Activated CD4-positive, alpha-beta T cell treated with anti-CD3 and anti-CD28 coated beads for 36 hours (primary cell): ENCODE measurements at regions of chr3 and their contacts with region 1.

Region 1: DNA sequence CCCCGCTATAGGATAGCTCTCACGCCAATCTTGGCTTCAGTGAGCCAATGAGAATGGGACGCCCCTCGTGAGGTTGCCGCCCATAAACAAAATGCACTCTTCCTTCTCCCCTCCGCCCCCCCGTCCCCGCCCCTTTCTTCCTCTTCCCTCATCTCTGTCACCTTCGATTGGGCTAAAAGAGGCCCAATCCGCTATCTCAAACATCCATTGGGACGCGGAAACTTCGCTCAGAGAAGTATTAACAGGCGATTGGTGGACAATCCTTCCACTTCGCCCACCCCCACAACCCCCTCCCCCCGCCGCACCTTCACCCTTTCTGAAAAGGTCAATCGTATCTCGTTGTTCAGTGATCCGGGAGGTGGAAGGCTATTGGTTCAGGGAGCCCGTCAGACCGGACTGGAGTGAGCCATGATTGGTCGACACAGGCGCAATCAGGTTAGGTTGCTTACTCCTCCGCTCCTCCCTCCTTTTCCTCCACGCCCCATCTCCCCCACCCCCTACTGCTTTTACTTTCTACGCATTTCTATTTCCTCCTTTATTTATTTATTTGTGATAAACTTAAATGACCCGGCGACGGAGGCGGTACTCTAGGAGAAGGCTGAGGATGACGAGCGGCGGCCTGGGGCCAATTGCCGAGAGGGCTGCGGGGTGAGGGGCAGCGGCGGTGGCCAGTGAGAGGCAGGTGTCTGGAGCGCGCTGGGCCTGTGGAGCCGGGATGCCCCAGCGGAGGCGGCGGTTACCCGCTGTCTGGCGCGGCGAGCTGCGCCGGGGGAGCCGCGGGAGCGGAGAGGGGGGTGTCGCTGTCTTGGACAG is 447 bp upstream of the ZBTB20 start:
- DNase-seq: peak; percentile 97
- ATAC-seq: peak; percentile 85
- H3K4me3 Mint-ChIP-seq: peak overlapping the region; percentile 97
- H3K27ac Mint-ChIP-seq: peak overlapping the region; percentile 98
- H3K4me1 Mint-ChIP-seq: peaks cover 21% of the 10 kb centered on the region
- H3K27me3 Mint-ChIP-seq: no peaks in the 10 kb centered on the region

Region 2: DNA sequence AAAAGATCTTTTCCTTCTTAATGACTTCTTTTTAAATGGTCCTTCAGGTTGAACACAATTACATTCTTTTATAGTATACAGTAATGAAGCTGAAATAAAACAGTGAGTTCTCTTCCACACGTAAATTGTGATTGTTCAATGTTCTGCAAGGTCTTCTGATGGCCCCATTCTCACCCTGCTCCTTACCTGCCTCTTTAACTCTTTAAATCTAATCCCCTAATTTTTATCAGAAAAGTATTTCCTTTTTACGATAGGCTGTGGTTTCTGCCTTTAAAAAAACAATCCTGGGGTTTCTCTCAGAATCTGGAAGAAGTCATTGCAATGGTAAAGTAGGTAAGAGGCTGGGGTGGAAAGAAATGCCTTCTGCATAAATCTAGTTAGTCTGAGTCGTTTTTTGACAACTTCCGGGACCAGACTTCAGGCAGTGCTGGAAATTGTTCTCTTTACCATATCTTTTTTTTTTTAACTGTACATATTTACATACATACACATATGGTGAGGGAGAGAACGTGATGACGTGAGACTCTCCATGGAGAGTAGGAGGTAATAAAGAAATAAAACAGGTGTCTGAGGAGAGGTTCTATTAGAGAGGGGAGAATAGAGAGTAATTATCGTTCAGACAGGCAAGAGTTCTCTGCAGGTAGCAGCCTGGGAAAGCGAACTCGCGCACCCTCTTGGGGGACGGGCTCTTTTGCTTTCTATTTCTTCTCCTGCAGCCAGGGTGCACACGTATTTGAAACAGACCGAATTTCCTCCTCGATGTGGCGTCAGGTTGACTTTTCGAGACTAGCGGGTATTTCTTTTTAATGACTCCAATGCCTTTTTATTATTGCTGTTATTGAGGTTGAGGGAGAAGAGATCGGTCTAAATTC is 1615.5 kb before region 1 on chr3 and contains the start of gene SIDT1:
- CTCF ChIA-PET with region 1: no interaction called
- POLR2A ChIA-PET with region 1: no interaction called
- intact Hi-C with region 1: loop called in 1 of 2 experiments (anchors 5 kb)
- DNase-seq: peak; percentile 85
- ATAC-seq: peak; percentile 78
- H3K4me3 Mint-ChIP-seq: peak within 1 kb of the TSS; percentile 89
- H3K27ac Mint-ChIP-seq: peak within 1 kb of the TSS; percentile 96
- H3K4me1 Mint-ChIP-seq: peaks cover 49% of the 10 kb centered on the region
- H3K27me3 Mint-ChIP-seq: no peaks in the 10 kb centered on the region
- total RNA-seq, gene SIDT1: 19.0 to 19.7 TPM

Region 3: GRCh38 chr3:113696658-113697499 is 1450.7 kb before region 1 on chr3:
- CTCF ChIA-PET with region 1: no interaction called
- POLR2A ChIA-PET with region 1: no interaction called
- intact Hi-C with region 1: loop called in 1 of 2 experiments (anchors 2 kb)
- DNase-seq: peak; percentile 99
- ATAC-seq: peak; percentile 92
- H3K4me3 Mint-ChIP-seq: no peak overlapping the region
- H3K27ac Mint-ChIP-seq: no peak overlapping the region
- H3K4me1 Mint-ChIP-seq: peaks cover 27% of the 10 kb centered on the region
- H3K27me3 Mint-ChIP-seq: no peaks in the 10 kb centered on the region

Region 4: DNA sequence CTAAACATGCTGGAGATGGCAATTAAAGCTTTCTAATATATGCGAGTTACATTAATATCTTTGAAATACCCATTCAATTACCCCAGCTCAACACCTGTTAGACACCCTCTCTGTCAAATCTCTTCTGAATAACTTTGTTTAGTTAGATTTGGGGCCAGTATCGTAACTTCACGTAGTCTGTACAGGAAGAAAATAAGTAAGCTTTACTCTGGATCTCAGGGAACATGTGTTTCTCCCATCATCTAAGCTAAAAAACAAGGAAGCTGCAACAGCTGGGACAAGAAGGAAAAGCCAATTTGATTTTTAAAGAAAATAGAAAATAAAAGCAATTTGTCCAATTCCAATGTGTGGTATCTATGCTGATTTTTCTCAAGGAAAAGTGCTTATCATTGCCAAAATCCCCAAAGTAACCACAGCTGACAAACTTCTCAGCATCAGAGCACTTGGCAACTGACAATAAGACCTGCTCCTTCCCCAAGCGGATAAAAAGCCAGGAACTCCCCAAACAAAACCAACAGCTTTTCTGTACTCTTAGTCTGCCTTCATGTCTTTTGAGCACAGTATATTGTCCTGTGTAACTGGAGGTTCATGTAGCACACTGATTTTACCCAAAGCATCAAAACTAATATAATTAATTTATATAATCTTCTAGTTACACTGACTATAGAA is 279.6 kb before region 1 on chr3:
- CTCF ChIA-PET with region 1: no interaction called
- POLR2A ChIA-PET with region 1: interaction called, 11 read pairs
- intact Hi-C with region 1: no loop called
- DNase-seq: no peak
- ATAC-seq: no peak
- H3K4me3 Mint-ChIP-seq: no peak overlapping the region
- H3K27ac Mint-ChIP-seq: no peak overlapping the region
- H3K4me1 Mint-ChIP-seq: peaks cover 27% of the 10 kb centered on the region
- H3K27me3 Mint-ChIP-seq: no peaks in the 10 kb centered on the region

Region 5: DNA sequence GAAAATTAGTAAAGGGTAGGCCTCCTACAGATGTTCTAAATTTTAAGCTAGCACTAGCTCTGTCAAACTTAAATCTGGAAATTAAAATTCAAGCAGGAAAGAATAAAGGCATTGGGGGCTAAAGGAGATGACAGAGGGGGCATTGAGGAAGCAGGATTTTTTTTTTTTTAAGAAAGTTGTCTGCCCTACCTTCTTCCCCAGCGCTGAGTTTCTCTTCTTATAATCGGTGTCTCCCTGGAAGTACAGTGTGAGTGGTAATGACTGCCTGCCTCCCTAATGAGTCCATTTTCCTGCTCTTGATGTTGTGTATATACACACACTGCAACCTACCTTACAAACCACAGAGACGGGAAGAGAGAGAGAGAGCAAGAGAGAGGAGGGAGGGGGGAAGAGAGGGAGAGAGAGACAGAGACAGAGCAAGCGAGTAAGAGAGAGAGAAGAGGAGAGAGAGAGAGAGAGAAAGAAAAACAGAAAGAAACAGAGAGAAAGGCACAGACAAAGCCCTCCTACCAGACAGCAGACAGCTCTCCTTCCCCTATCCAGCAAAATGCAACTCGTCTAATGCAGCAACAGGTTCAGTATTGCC is 47.5 kb before region 1 on chr3:
- CTCF ChIA-PET with region 1: interaction called, 12 read pairs
- POLR2A ChIA-PET with region 1: no interaction called
- intact Hi-C with region 1: loop called (anchors 1 to 2 kb)
- DNase-seq: peak; percentile 15
- ATAC-seq: peak; percentile 92
- H3K4me3 Mint-ChIP-seq: peak overlapping the region; percentile 80
- H3K27ac Mint-ChIP-seq: peak overlapping the region; percentile 89
- H3K4me1 Mint-ChIP-seq: peaks cover 42% of the 10 kb centered on the region
- H3K27me3 Mint-ChIP-seq: no peaks in the 10 kb centered on the region

Region 6: GRCh38 chr3:115169808-115170207 is 22.3 kb after region 1 on chr3:
- CTCF ChIA-PET with region 1: interaction called, 6 read pairs
- POLR2A ChIA-PET with region 1: interaction called, 4 read pairs
- intact Hi-C with region 1: loop called in 1 of 2 experiments (anchors 1 kb)
- DNase-seq: no peak
- ATAC-seq: no peak
- H3K4me3 Mint-ChIP-seq: no peak overlapping the region
- H3K27ac Mint-ChIP-seq: no peak overlapping the region
- H3K4me1 Mint-ChIP-seq: peaks cover 12% of the 10 kb centered on the region
- H3K27me3 Mint-ChIP-seq: no peaks in the 10 kb centered on the region

Region 7: DNA sequence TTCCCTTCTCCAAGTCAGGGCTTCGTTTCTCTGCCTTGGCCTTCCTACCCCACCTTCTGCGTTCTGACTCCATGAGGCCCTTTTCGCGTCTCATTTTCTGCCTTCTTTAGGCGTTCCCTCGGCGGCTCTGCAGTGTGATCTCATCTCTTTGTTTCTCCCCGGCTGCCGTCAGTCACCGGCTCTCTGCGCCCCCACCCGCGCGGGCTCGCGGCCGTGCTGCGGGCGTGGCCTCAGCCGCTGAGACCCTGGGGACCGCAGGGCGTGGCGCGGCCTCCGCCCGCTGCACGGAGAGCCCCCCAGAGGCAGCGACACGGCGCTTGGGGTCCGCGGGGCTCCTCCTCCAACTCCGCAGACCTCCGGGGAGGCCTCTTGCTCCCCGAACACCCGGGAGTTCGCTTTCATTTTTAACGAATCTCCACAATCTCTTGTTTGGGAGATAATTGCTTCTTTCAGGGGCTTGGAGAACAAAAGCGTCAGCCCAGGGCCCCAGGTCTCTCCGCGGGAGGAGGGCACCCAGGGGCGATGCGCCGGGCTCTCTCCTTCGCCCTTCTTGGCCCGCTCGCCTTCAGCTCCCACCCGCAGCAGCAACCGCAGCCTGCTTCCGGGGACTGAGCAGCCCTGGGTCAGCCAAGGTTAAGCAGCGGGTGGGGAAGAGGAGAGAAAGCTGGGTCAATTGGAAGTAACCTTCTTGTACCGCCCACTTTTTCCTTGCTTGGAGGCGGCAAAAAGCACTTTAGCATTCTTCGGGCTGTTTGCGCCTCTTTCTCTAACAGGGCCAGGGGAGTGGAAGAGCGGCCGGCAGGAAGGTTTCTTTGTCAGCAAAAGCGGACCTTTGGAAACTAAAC is 511.0 kb after region 1 on chr3:
- CTCF ChIA-PET with region 1: no interaction called
- POLR2A ChIA-PET with region 1: no interaction called
- intact Hi-C with region 1: loop called (anchors 1 to 2 kb)
- DNase-seq: peak; percentile 88
- ATAC-seq: peak; percentile 90
- H3K4me3 Mint-ChIP-seq: peak overlapping the region; percentile 66
- H3K27ac Mint-ChIP-seq: peak overlapping the region; percentile 95
- H3K4me1 Mint-ChIP-seq: peaks cover 51% of the 10 kb centered on the region
- H3K27me3 Mint-ChIP-seq: peaks cover 2% of the 10 kb centered on the region